ENCODE measurements at regions of chr11 and their contacts with region 1.

Region 1: GRCh38 chr11:61947486-61948210 is 2.5 kb upstream of the BEST1 start:
- DNase-seq: no peak
- H3K4me3 ChIP-seq: no peak overlapping the region
- H3K27me3 ChIP-seq: peaks cover 2% of the 10 kb centered on the region
- CTCF ChIP-seq: peak; percentile 98

Region 2: GRCh38 chr11:61756452-61757212 is 191.0 kb before region 1 on chr11:
- CTCF ChIA-PET with region 1: no interaction called
- POLR2A ChIA-PET with region 1: no interaction called
- DNase-seq: no peak
- H3K4me3 ChIP-seq: no peak overlapping the region
- H3K27me3 ChIP-seq: no peaks in the 10 kb centered on the region; the same call in 1 of the 2 replicates
- CTCF ChIP-seq: no peak

Region 3: GRCh38 chr11:61871158-61871597 is 76.5 kb before region 1 on chr11:
- CTCF ChIA-PET with region 1: interaction called, 45 read pairs
- POLR2A ChIA-PET with region 1: no interaction called
- DNase-seq: no peak
- H3K4me3 ChIP-seq: no peak overlapping the region
- H3K27me3 ChIP-seq: no peaks in the 10 kb centered on the region
- CTCF ChIP-seq: peak; percentile 97

Region 4: DNA sequence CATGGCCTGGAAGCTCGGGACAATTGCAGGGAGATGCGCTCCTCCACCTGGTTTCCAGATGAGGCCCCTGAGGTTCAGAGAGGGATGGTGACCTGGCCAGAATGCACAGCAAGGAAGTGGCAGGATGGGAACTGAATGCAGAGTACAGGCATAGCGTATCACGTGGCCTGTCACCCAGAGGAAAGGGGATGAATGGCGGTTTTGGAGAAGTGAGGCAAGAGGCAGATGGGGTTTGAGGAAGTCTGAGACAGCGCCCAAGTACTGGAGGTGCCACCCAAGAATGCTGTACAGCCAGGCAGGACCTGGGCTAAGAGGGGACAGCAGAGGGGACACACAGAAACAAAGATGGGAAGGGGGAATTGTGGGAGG is 35.1 kb before region 1 on chr11:
- CTCF ChIA-PET with region 1: interaction called, 18 read pairs
- POLR2A ChIA-PET with region 1: no interaction called
- DNase-seq: no peak
- H3K4me3 ChIP-seq: no peak overlapping the region
- H3K27me3 ChIP-seq: no peaks in the 10 kb centered on the region
- CTCF ChIP-seq: no peak

Region 5: DNA sequence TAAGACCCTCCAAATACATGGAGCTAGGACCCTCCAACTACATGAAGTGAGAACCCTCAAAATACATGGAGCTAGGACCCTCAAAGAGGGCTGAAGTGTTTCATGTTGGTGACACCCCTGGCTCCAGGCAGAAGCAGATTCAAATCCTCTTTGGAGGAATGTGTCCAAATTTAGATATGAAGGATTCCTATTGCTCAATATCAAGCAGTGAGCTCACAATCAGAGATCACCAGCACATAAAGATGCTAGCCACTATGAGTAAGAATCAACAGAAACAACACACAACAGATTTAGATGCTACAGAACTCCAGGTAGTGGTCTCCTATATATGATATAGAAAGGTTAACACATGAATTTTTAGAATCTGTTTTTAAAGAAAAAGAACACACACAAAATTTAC is 19.0 kb before region 1 on chr11:
- CTCF ChIA-PET with region 1: interaction called, 31 read pairs
- POLR2A ChIA-PET with region 1: interaction called, 3 read pairs
- DNase-seq: no peak
- H3K4me3 ChIP-seq: no peak overlapping the region
- H3K27me3 ChIP-seq: no peaks in the 10 kb centered on the region
- CTCF ChIP-seq: no peak

Region 6: DNA sequence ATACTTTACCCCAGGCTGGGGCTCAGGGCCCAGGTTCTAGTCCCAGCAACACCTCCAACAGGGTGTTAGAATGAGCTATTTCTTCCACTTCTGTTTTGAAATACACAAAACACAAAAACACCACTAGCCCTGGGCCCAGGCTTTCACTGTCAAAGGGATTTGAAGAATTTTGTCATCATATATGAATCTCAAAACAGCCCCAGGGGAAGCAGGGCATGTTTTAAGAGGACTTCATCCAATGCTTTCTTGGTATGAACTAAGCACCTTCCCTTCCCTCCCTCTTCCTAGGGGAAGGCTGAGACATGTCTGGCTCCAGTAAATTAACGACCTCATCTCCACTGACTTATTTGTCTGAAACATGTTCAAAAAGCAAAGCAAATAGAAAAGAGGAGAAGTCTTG is 100.4 kb after region 1 on chr11:
- CTCF ChIA-PET with region 1: no interaction called
- POLR2A ChIA-PET with region 1: no interaction called
- DNase-seq: peak; percentile 30
- H3K4me3 ChIP-seq: no peak overlapping the region
- H3K27me3 ChIP-seq: no peaks in the 10 kb centered on the region; the same call in 1 of the 2 replicates
- CTCF ChIP-seq: no peak

Region 7: DNA sequence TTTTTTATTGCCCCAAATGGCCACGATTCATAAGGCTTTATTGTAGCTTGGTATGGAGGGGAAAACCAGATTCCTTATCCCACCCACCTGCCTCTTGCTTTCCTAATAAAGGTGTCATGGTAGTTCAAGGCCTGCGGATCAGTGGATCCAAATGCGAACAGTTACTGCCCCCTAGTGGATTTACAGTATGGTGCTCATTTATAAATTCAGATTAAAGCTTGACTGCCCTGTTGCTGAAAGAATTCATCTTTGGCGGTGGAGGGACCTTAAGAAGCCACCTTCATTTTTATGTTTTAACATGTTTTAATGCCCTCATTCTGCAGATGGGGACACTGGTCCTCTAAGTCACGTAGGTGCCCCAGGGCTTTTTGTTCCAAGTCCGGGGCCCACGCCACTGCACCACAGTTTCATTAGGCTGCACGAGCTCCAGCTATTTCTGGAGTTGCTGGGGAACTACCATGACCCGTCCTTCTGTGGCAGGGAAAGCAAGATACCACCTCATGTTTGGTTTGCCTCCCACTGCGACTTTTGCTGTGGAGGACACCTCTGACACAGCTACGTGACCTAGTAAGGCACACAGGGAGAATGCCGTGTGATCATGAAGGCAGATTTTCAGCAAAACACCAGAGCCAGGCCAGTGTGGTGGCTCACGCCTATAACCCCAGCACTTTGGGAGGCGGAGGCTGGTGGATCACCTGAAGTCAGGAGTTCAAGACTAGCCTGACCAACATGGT is 160.5 kb after region 1 on chr11:
- CTCF ChIA-PET with region 1: interaction called, 83 read pairs
- POLR2A ChIA-PET with region 1: no interaction called
- DNase-seq: no peak
- H3K4me3 ChIP-seq: no peak overlapping the region
- H3K27me3 ChIP-seq: no peaks in the 10 kb centered on the region
- CTCF ChIP-seq: peak; percentile 72

Region 8: DNA sequence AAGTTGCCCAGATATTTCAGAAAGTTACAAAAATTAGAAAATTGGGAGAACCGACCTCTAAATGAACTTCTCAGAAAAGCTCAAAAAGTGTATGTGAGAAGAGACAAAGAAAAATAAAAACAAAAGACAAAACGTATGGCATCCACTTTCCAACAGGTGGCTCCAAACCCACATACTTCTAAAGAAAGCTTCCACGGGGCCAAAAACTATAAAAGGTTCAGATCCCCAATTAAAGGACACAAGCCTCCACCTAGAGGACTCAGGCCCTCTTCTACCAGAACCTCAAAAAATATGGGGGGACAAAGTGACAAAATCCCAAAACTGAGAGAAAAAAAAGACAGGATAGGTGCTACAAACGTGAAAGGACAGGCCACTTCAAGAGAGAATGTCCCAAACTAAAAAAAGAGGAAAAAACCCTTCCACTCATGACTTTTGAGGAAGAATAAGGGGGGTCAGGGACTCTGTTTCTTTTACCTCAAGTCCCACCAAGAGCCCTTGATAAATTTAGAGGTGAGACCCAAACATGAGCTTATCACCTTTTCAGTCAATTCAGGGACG is 269.6 kb after region 1 on chr11:
- CTCF ChIA-PET with region 1: no interaction called
- POLR2A ChIA-PET with region 1: no interaction called
- DNase-seq: no peak
- H3K4me3 ChIP-seq: no peak overlapping the region
- H3K27me3 ChIP-seq: peaks cover 3% of the 10 kb centered on the region
- CTCF ChIP-seq: peak; percentile 30

Measured in BJ (cell line).